ENCODE measurements at regions of chr1 and their contacts with region 1.

Region 1: GRCh38 chr1:73674945-73675561 is 522.9 kb downstream of the LRRIQ3 start:
- DNase-seq: peak; percentile 28
- H3K4me3 ChIP-seq: no peak overlapping the region
- H3K27ac ChIP-seq: no peak overlapping the region
- H3K4me1 ChIP-seq: no peaks in the 10 kb centered on the region
- H3K27me3 ChIP-seq: no peaks in the 10 kb centered on the region
- CTCF ChIP-seq: peak; percentile 22 to 39
- POLR2A ChIP-seq: no peak

Region 2: GRCh38 chr1:72186733-72187307 is 1488.2 kb before region 1 on chr1:
- CTCF ChIA-PET with region 1: interaction called, 5 read pairs
- POLR2A ChIA-PET with region 1: no interaction called
- dilution Hi-C with region 1: no loop called
- intact Hi-C with region 1: loop called (anchors 10 kb)
- DNase-seq: peak; percentile 51
- H3K4me3 ChIP-seq: no peak overlapping the region
- H3K27ac ChIP-seq: no peak overlapping the region
- H3K4me1 ChIP-seq: no peaks in the 10 kb centered on the region
- H3K27me3 ChIP-seq: no peaks in the 10 kb centered on the region
- CTCF ChIP-seq: peak; percentile 25 to 48
- POLR2A ChIP-seq: no peak

Region 3: GRCh38 chr1:73452522-73452921 is 222.5 kb before region 1 on chr1:
- CTCF ChIA-PET with region 1: no interaction called
- POLR2A ChIA-PET with region 1: no interaction called
- dilution Hi-C with region 1: no loop called
- intact Hi-C with region 1: loop called (anchors 1 kb)
- DNase-seq: no peak
- H3K4me3 ChIP-seq: no peak overlapping the region
- H3K27ac ChIP-seq: no peak overlapping the region
- H3K4me1 ChIP-seq: no peaks in the 10 kb centered on the region
- H3K27me3 ChIP-seq: no peaks in the 10 kb centered on the region
- CTCF ChIP-seq: no peak
- POLR2A ChIP-seq: no peak

Region 4: GRCh38 chr1:73593364-73593763 is 81.7 kb before region 1 on chr1:
- CTCF ChIA-PET with region 1: interaction called, 6 read pairs
- POLR2A ChIA-PET with region 1: no interaction called
- dilution Hi-C with region 1: no loop called
- intact Hi-C with region 1: loop called (anchors 5 kb)
- DNase-seq: peak; percentile 83
- H3K4me3 ChIP-seq: peak overlapping the region in 1 of 3 experiments; percentile 21
- H3K27ac ChIP-seq: peak overlapping the region; percentile 74
- H3K4me1 ChIP-seq: peaks cover 17% of the 10 kb centered on the region
- H3K27me3 ChIP-seq: no peaks in the 10 kb centered on the region
- CTCF ChIP-seq: no peak
- POLR2A ChIP-seq: no peak

Measured in endothelial cell of umbilical vein (primary cell).